Breast epithelium (tissue), 4 donors: ENCODE measurements at regions of chr3 and their contacts with region 1.

Region 1: DNA sequence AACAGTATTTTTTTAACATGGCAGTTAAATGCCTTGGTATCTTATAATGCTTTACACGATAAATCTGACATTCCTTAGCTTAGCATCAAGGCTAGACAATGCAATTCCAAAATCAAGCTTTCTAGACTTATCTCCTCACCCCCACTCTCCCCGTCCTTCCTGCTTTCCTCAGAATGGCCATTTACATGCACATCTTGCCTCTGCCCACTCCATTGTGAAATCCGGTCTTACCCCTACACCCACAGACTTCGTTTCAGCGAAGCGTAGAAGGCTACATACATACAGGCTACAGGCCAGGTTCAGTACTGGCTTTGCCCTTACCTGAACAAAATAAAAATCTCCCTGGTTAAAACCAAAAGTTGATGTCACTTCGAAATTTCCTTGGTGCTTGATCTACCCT is 58.6 kb upstream of the SLC12A8 start:
- DNase-seq: no peak
- H3K4me3 ChIP-seq: no peak overlapping the region
- H3K27ac ChIP-seq: no peak overlapping the region
- H3K4me1 ChIP-seq: no peaks in the 10 kb centered on the region
- H3K27me3 ChIP-seq: no peaks in the 10 kb centered on the region
- CTCF ChIP-seq: no peak
- POLR2A ChIP-seq: no peak

Region 2: DNA sequence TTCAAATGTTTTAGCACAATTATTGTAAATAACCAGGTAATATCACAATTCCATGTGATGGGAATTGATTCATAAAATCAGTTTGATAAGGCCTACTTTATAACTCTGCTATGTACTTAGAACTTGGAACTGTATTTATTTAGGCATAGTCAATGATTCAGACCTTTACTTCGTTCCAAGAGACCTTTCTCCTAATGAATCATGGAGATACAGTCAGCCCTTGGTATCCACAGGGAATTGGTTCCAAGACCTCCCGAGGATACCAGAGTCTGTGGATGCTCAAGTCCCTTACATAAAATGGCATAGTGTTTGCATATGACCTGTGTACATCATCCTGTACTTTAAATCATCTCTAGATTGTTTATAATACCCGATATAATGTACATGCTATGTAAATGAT is 601.7 kb before region 1 on chr3:
- intact Hi-C with region 1: no loop called
- DNase-seq: no peak
- H3K4me3 ChIP-seq: no peak overlapping the region
- H3K27ac ChIP-seq: no peak overlapping the region
- H3K4me1 ChIP-seq: no peaks in the 10 kb centered on the region
- H3K27me3 ChIP-seq: no peaks in the 10 kb centered on the region
- CTCF ChIP-seq: no peak
- POLR2A ChIP-seq: no peak

Region 3: DNA sequence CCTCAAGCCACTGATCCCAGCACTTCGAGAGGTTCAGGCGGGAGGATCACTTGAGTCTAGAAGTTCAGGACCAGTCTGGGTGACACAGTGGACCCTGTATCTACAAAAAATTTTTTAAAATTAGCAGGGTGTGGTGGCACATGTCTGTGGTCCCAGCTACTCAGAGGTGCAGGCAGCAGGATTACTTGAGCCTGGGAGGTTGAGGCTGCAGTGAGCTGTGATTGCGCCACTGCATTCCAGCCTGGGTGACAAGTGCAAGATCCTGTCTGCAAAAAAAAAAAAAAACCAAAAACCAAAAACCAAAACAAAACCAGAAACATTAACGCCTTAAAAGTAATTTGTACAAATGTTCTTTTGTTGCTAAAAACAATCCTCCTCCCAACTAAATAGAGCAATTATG is 30.6 kb before region 1 on chr3:
- intact Hi-C with region 1: loop called (anchors 2 kb)
- DNase-seq: no peak
- H3K4me3 ChIP-seq: no peak overlapping the region
- H3K27ac ChIP-seq: no peak overlapping the region
- H3K4me1 ChIP-seq: no peaks in the 10 kb centered on the region
- H3K27me3 ChIP-seq: no peaks in the 10 kb centered on the region
- CTCF ChIP-seq: no peak
- POLR2A ChIP-seq: no peak